HCT116 (cell line): ENCODE measurements at regions of chr12 and their contacts with region 1.

Region 1: GRCh38 chr12:131980260-131980659 is 30.5 kb downstream of the EP400 start:
- DNase-seq: no peak
- ATAC-seq: peak; percentile 65
- H3K4me3 ChIP-seq: no peak overlapping the region
- H3K27ac ChIP-seq: no peak overlapping the region
- H3K4me1 ChIP-seq: no peaks in the 10 kb centered on the region
- H3K27me3 ChIP-seq: no peaks in the 10 kb centered on the region
- CTCF ChIP-seq: 0 out of 6 replicates have a peak, but pooled peaks of 1 of the 3 experiments have one; percentile 9
- POLR2A ChIP-seq: no peak
- RAD21 ChIP-seq: peak; percentile 41

Region 2: DNA sequence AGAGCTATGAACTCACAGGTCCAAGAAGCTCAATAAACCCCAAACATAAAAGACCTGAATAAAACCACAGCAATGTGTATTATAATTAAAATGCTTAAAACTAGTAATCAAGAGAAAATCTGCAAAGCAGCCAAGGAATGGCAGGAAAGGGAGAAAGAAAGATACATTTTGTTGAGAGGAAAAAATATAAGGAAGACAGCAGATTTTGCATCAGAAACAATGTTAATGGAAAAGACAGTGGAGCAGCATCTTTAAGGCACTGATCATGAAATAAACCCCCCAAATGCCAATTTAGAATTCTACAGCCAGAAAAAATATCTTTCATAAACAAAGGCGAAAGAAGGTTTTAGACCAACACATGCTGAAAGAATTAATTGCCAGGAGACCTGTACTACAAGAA is 1069.1 kb before region 1 on chr12:
- CTCF ChIA-PET with region 1: no interaction called
- POLR2A ChIA-PET with region 1: no interaction called
- RAD21 ChIA-PET with region 1: no interaction called
- intact Hi-C with region 1: loop called (anchors 5 kb)
- DNase-seq: no peak
- ATAC-seq: no peak
- H3K4me3 ChIP-seq: no peak overlapping the region
- H3K27ac ChIP-seq: no peak overlapping the region
- H3K4me1 ChIP-seq: peaks cover 2 to 4% of the 10 kb centered on the region in 2 experiments; a peak in 1 of 4 replicates
- H3K27me3 ChIP-seq: no peaks in the 10 kb centered on the region
- CTCF ChIP-seq: no peak
- POLR2A ChIP-seq: no peak
- RAD21 ChIP-seq: no peak

Region 3: GRCh38 chr12:131841555-131841954 is 138.7 kb before region 1 on chr12:
- CTCF ChIA-PET with region 1: no interaction called
- POLR2A ChIA-PET with region 1: no interaction called
- RAD21 ChIA-PET with region 1: no interaction called
- intact Hi-C with region 1: no loop called
- DNase-seq: no peak
- ATAC-seq: no peak
- H3K4me3 ChIP-seq: no peak overlapping the region
- H3K27ac ChIP-seq: no peak overlapping the region
- H3K4me1 ChIP-seq: no peaks in the 10 kb centered on the region
- H3K27me3 ChIP-seq: no peaks in the 10 kb centered on the region
- CTCF ChIP-seq: no peak
- POLR2A ChIP-seq: no peak
- RAD21 ChIP-seq: no peak

Region 4: DNA sequence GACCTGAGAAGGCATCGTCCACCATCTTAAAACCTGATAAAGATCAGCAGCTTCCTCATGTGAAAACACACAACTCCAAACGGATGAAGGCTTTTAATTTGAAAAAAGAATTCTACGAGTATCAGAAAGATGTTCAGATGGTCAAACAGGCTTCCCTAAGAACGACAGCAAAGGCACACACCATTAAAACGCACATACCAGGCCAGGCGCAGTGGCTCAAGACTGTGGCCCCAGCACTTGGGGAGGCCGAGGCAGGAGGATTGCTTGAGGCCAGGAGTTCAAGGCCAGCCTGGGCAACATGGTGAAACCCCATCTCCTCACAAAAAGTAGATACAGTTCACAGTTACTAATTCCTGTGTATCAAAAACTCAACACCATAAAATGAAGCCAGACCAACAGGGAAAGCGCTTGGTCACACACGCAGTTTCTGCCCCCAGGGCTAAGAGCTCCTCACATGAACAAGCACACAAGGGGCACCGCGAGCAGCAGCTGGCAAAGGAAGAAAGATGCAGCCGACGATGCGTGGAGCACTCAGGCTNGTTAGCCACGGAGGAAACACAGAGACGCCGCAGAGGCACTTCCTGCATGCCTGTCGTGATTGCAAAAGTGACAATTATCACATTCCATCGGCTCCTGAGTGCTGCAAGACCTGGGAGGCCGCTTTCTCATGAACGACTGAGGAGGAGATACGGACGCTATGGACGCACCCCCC is 242.0 kb after region 1 on chr12:
- CTCF ChIA-PET with region 1: no interaction called
- POLR2A ChIA-PET with region 1: no interaction called
- RAD21 ChIA-PET with region 1: no interaction called
- intact Hi-C with region 1: no loop called
- DNase-seq: peak; percentile 71
- ATAC-seq: peak; percentile 65
- H3K4me3 ChIP-seq: peak overlapping the region in 1 of 2 experiments; percentile 34; a peak in 1 of 4 replicates
- H3K27ac ChIP-seq: peak overlapping the region; percentile 33; the same call in 1 of the 2 replicates
- H3K4me1 ChIP-seq: peaks cover 9 to 41% of the 10 kb centered on the region in 2 experiments; a peak in 3 of 4 replicates
- H3K27me3 ChIP-seq: peaks cover 8% of the 10 kb centered on the region; the same call in 1 of the 2 replicates
- CTCF ChIP-seq: no peak
- POLR2A ChIP-seq: no peak
- RAD21 ChIP-seq: no peak